Dorsolateral prefrontal cortex (tissue), 120 donors: ENCODE measurements at regions of chr18 and their contacts with region 1.

Region 1: GRCh38 chr18:62522504-62523254 is at the start of gene ZCCHC2:
- DNase-seq: peak; percentile 96 to 100 (median 98)
- H3K4me3 ChIP-seq: peak within 1 kb of the TSS; percentile 70 to 98 (median 94)
- H3K27ac ChIP-seq: peak within 1 kb of the TSS; percentile 91 to 100 (median 98)
- H3K27me3 ChIP-seq: no peaks in the 10 kb centered on the region
- CTCF ChIP-seq: peak in 24 of 56 donors; percentile 0 to 53 (median 22)
- total RNA-seq, gene ZCCHC2: 26.3 to 65.9 (median 38.4) TPM

Region 2: GRCh38 chr18:62425465-62426195 is 97.0 kb before region 1 on chr18:
- intact Hi-C with region 1: loop called (anchors 2 to 5 kb)
- DNase-seq: peak in 8 of 10 donors; percentile 57 to 87 (median 66)
- H3K4me3 ChIP-seq: peak overlapping the region in 57 of 59 donors; percentile 12 to 61 (median 43)
- H3K27ac ChIP-seq: peak overlapping the region in 42 of 59 donors; percentile 1 to 80 (median 57)
- H3K27me3 ChIP-seq: no peaks in the 10 kb centered on the region
- CTCF ChIP-seq: peak; percentile 77 to 95 (median 88)

Region 3: DNA sequence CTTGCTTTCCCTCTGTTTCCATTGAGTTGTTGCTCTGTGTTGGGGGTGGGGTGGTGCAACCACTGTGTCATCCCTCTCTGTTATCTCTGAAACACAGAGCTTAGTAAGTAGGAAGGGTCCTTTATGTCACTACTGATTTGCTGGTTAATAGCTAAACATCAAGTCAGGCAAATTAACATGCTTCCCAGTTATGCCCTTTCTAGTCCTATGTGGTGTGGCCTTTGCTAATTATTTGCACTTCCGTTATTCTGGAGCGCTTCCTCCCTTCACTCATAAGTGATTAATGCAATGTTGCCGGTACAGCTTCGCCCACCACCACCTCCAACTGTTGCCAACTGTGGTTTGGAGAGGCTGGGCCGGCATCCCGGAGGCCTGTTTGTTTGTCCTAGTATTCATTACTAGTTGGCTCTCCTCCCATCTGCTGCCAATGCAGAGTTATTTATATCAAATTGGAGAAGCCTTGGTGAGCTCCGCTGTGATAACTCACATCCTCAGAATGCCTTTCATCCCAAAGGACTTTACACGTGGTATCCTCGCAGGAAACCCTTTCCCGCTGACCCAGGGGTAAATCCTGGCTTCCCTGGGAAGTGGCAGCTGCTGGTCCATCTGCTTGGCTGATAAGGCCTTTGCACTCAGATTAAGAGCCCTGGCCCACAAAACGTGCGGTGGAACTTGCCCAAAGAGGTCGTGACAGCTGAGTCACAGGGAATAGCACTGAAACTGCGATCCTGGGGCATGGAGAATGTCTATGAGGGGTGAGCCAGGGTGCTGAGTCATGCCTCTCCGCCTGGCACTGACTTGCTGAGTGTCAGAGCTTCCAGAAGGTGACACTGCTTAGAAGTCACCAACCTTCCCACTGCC is 71.9 kb before region 1 on chr18:
- intact Hi-C with region 1: no loop called
- DNase-seq: peak in 5 of 10 donors; percentile 17 to 73 (median 41)
- H3K4me3 ChIP-seq: peak overlapping the region in 5 of 59 donors; percentile 4 to 32 (median 16)
- H3K27ac ChIP-seq: peak overlapping the region in 2 of 59 donors; percentile 17 to 47
- H3K27me3 ChIP-seq: no peaks in the 10 kb centered on the region
- CTCF ChIP-seq: no peak

Region 4: DNA sequence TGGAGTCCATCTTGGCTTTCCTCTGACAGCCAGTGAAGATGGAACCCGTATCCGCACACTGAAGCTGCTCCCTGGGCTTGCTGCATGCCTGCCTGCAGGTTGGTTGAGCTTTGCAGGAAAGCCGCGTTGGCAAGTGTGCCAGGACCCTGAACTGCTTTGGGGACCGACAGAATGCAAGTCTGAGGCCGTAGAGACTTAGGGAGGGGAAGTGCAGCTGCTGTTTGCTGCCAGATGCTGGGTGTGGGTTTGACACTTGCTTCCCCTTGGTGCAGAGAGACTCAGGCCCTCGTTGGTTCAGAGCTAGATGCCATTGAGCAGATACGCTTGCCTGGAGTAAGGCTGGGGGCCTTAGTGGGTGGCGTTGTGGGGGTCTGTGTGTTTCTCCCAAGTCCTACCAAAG is 179.6 kb after region 1 on chr18:
- intact Hi-C with region 1: no loop called
- DNase-seq: no peak
- H3K4me3 ChIP-seq: no peak overlapping the region
- H3K27ac ChIP-seq: peak overlapping the region in 1 of 59 donors; percentile 10
- H3K27me3 ChIP-seq: no peaks in the 10 kb centered on the region
- CTCF ChIP-seq: no peak

Region 5: DNA sequence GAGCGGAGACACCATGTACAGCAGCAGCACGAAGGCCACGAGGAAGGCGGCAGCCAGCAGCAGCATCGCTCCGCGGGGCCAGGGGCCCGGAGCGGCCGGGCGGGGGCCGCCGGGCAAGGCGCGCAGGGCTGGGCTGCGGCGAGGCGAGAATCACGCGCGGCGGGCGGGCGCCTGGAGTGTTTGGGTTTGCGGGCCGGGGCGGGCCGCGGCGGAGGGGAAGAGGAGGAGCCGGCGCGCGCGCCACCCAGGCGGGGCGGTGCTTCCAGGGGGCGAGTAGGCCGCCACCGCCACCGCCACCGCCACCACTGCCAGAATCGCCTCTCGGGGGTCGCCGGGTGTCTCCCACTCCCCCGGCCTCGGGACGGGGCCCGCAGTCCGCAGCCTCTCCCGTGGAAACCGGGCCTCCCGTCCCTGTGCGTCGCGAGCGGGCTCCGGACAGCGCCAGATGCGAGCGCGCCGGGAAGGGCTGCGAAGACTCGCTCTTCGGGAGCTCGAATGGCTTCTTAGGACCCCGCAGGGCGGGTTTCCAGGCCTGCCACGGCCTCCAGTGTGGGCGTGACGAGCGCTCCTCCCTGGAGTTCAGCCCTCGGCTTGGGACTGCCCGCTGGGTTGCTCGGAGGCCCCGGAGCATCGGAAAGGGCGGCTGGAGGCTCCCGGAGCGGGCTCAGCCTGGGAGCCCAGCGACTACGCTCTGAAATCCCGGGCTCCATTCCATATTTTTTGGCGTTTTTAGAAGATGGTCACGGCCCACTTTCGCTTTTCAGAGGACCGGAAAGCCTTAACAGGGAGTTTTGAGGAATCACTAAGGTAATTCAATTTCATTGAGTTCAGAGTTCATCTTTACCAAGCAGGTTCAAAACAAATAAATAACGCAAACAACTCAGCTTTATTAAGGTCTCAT is 844.6 kb after region 1 on chr18 and contains the start of gene KDSR:
- intact Hi-C with region 1: loop called (anchors 5 kb)
- DNase-seq: peak; percentile 75 to 95 (median 92)
- H3K4me3 ChIP-seq: peak within 1 kb of the TSS; percentile 77 to 97 (median 89)
- H3K27ac ChIP-seq: peak within 1 kb of the TSS; percentile 75 to 99 (median 96)
- H3K27me3 ChIP-seq: no peaks in the 10 kb centered on the region
- CTCF ChIP-seq: peak in 19 of 56 donors; percentile 2 to 54 (median 24)
- total RNA-seq, gene KDSR: 43.2 to 111 (median 58.5) TPM